MCF 10A (cell line): ENCODE measurements at regions of chr2 and their contacts with region 1.

Region 1: GRCh38 chr2:60163691-60164090 is 389.8 kb downstream of the BCL11A start:
- DNase-seq: no peak
- H3K4me3 Mint-ChIP-seq: no peak overlapping the region
- H3K27ac Mint-ChIP-seq: no peak overlapping the region
- H3K4me1 Mint-ChIP-seq: no peaks in the 10 kb centered on the region
- H3K27me3 Mint-ChIP-seq: no peaks in the 10 kb centered on the region
- CTCF ChIP-seq: no peak

Region 2: DNA sequence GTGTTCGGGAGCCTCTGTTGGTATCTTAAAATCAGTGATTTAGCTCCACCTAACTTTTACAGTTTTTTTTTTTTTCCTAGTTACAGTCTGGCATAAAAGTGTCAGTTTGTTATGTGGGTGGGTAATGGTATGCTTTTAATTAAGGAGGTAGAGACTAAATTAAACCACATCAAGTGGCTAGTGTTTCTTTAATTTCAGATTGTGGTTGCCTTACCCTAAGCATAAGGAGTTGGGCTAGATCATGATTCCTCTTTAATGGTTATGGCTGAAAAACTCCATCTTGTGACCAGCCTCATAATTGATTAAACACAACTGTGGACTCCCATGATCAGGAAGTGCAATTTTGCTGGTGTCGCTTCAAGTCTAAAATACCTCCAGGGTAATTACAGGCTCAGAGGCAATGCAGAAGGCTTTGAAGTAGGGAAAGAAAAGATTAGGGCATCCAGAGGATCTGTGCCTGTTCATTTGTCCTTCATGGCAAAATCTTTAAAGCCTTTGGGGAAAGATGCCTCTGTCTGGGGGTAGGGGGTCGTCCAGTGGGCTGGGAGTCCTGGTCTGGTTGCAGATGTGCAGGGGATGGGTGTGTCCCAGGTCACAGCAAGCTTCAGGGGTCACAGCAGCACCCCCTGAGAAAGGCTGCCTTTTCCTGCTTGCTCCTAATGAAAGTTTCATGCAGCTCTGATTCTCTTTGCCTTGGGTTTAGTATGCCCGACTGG is 189.5 kb before region 1 on chr2:
- CTCF ChIA-PET with region 1: no interaction called
- POLR2A ChIA-PET with region 1: no interaction called
- intact Hi-C with region 1: no loop called
- DNase-seq: no peak
- H3K4me3 Mint-ChIP-seq: no peak overlapping the region
- H3K27ac Mint-ChIP-seq: no peak overlapping the region
- H3K4me1 Mint-ChIP-seq: no peaks in the 10 kb centered on the region
- H3K27me3 Mint-ChIP-seq: no peaks in the 10 kb centered on the region
- CTCF ChIP-seq: no peak

Region 3: DNA sequence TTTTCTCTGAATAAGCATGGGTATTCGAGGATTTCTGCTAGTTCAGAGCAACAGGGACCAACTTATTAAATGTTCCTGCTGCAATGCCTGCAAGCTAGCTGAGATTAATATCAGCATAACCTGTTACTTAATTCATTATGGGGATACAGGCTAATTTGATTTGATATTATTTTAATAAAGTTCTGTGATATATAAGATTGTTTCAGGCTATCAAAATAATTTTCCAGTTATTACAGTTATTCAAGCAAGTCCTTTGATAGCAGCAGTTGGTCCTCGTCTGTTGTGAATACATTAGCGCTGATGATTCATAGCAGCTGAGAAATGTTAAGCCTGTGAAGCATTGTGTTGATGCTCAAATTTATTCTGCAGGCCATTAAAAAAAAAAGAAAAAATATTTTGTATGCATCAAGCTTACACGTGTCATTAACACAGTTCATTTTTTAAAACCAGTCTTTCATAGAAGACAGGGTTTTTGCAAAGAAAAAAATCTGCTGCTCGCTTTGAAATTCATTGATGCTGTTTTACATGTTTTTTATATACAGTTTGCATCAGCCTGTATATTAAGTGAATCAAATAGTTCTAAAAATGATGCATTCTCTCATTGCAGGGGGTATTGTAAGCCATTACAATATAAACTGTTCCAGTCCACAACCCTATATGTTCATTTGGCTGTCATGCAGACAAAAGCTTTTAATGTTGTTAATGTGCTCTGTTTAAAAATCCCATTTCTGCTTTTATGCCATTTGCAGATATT is 92.8 kb before region 1 on chr2:
- CTCF ChIA-PET with region 1: no interaction called
- POLR2A ChIA-PET with region 1: no interaction called
- intact Hi-C with region 1: no loop called
- DNase-seq: no peak
- H3K4me3 Mint-ChIP-seq: no peak overlapping the region
- H3K27ac Mint-ChIP-seq: no peak overlapping the region
- H3K4me1 Mint-ChIP-seq: no peaks in the 10 kb centered on the region
- H3K27me3 Mint-ChIP-seq: peaks cover 7% of the 10 kb centered on the region
- CTCF ChIP-seq: no peak

Region 4: DNA sequence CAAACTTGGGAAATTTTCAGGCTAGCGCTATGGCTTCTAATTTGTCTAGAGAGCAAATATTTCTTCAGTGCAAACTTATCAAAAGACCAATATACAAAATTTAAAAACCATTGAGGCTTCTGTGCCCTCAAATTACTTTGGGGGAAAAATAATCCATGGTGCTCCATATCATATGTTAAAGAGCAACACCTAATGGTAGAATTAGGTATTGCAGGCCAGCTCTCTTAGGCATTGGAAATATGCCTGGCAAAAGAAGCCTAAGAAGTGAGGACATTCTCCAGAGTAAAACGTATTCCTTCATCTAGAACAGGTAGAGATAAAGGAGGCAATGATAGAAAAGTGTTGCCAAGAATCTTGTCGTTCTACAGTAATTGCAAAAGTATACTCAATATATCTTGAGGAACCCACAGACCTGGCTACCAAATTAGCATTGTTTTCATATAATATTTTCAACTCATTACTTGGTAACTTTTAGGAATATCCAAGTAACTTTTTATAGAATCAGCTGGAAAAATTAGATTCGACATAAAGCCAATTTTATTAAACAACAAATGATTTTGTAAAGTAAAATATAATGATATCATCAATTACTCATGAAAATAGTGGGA is 11.4 kb before region 1 on chr2:
- CTCF ChIA-PET with region 1: interaction called, 10 read pairs
- POLR2A ChIA-PET with region 1: no interaction called
- intact Hi-C with region 1: no loop called
- DNase-seq: peak; percentile 43
- H3K4me3 Mint-ChIP-seq: no peak overlapping the region
- H3K27ac Mint-ChIP-seq: no peak overlapping the region
- H3K4me1 Mint-ChIP-seq: no peaks in the 10 kb centered on the region
- H3K27me3 Mint-ChIP-seq: no peaks in the 10 kb centered on the region
- CTCF ChIP-seq: peak; percentile 79